Head of caudate nucleus (tissue), 42 donors: ENCODE measurements at regions of chr20 and their contacts with region 1.

Region 1: DNA sequence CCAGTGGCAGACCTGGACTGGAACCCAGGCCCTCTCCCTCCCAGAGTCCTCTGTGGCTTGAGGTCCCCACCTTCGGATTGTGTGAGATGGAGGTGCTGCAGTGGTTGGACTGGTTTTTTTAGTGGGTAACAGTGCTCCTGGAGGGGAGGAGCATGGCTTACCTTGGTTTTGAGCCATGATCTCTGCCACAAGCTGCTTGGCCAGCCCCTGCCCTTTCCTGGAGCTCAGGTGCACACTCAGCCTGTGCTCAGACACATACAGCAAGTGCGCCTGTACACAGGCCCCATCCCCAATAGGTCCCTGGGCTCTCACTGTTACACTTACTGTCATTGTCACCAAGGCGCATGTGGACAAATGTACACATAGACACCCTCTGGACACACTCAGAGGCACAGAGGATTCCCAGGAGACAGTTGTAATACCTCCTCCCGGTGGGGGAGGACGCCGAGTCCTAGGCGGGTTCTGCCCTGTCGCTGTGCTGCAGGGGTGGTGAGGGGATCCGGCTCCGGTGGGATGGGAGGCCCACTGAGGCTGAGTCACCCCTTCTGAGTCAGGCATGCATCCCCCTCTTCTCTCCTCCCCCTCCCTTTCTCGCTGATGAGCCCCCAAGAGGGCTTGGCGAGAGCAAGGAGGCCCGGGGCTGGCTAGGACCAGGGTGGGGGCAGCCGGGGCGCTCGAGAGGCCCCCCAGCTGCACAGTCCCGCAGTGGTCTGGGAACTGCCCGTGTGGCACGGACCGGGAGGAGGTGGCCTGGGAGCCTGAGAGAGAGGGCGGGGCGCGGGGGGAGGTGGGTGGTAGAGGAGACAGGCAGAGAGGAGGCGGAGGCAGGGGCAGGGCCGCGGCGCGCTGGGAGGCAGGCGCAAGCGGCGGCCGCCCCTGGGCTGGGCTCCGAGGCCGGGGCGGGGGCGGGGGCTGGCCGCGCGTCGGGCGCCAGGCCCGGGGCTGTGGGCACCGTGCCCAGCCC is 522 bp upstream of the EPB41L1 start:
- DNase-seq: peak; percentile 77 to 95 (median 88)

Region 2: DNA sequence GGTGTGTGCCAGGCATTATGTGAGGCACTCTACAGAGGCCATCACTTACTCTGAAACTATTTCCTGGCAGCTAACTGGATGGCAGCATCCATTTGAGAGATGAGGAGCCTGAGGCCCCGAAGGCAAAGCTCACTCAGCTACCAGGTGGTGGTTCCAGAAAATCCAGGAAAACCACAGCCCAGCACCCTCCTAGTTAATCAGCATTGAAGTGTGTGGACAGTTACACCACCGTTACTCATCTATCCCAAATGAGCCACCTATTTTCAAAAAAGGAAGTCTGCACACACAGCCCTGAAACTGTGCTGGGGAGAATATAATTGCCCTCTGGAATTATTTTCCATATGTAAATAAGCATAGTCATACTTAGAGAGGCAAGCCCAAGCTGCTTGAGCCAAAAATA is 118.3 kb before region 1 on chr20:
- intact Hi-C with region 1: no loop called
- DNase-seq: no peak

Region 3: DNA sequence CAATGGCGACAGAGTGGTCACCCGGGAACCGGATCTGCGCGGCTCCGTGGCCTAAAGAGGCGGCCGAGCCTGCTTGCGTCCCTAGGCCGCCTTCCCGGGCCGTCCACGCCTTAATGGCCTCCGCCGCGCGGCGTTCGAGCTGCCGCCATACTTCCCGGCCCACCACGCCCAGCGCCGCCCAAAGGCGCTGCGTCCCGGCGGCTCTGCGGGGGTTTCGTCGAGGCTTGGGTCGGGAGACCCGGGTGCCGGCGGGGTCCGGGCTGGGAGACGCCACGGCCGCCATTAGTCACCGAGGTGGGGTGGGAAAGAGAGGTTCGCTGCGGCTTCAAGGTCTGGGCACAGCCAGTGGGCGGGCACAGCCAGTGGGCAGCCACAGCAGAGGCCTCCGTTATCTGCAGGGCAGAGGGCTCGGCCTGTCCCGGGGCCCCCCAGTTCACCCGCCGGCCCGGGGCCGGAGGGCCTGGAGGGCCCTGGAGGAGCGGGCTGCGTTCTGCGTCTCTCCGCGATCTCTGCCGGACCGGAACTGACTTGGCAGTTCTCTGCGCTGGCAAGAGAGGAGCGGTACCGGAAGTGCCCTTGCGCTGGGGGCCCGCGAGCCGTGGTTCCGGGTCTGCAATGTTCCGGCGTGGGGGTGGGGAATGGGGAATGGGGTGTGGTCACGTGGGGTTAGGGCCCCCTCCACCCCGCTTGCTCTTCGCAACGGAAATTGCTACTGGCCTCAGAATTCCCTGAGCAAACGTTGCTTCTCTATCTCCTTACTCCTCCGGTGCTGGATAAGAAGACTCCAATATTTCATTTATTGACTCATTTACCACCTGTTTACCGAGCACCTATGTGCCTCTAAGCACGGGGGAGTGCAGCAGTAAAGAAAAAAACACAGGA is 103.3 kb before region 1 on chr20:
- intact Hi-C with region 1: loop called (anchors 10 kb)
- DNase-seq: peak; percentile 82 to 97 (median 93)

Region 4: DNA sequence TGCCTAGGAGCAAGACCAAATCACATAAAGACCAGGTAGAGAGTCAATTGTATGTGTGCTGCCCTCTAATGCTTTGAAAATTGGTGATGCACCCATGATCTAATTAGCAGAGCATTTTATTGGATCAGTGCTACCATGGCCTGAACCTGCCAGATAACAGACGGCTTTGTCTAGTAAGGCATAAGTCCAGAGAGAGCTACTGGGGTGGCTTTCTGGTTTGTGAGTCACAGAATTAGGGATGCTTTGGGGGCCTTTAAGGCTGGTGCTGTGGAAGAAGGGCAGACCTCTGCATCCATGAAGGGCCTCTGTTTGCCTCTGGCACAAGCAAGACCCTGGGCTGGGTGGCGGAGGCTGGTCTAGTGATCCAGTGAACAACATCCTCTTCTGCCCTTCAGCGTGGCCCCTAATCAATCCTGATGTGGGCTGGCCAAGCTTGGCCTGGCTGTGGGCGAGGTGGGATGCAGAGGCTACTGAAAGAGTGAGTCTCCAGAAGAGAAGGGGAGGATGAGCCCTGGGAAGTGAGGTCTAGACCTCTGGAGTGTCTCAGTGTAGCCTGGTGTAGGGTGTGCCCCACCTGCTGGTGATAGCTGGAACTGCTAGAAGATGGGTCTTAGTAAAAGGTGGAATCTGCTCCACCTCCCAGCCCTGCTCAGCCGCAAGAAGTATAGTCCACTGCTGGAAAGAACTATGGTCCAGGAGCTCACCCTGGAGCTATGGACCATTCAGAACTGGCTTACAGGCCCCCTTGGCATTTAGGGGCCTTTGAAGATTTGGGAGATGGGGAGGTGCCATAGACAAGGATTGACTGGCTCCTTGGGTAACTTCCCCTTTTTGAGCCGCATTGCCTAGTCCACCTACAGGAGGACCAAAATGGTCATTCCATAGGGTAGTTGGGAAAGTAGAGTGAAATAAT is 45.6 kb after region 1 on chr20:
- intact Hi-C with region 1: loop called (anchors 2 kb)
- DNase-seq: peak; percentile 49 to 95 (median 88)

Region 5: DNA sequence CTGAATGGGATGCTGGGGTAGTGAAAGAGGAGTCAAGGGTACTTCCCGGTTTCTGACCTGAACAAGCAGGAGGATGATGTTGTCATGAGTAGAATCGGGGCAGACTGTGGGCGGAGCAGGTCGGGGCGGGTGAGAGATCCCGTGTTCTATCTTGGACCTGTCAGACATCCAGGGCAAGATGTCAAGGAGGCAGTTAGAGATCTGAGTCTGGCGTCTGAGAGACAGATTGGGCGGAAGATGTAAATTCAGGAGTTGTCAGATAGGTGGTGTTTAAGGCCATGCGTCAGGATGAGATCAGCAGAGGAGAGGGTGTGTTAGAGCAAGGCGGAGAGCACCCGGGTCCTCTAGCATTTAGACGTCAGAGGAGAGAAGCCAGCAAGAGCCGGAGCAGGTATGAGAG is 267.6 kb after region 1 on chr20:
- intact Hi-C with region 1: no loop called
- DNase-seq: peak in 30 of 42 donors; percentile 14 to 77 (median 42)